PC-9 (cell line): ENCODE measurements at regions of chr3 and their contacts with region 1.

Region 1: DNA sequence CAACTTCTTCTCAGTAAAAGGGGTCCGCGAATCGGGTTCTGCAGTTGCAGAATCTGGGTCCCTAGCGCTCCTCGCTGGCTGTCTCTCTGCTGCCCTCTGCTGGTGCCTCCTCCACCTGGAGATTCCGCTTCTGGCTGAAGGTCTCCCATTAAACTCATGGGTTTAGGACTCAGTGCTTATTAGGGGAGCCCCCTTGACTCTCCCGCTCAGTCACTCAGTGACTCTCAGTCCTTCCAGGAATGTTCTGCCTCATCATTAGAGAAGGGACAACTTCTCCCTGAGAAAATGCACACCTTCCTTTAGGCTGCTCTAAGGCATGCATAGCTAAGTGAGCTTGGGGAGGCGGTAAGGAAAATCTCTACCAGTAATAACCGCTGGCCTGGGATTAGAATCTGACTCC is 7.1 kb downstream of the CPN2 start:
- DNase-seq: peak; percentile 50 to 81
- H3K4me3 ChIP-seq: no peak overlapping the region
- H3K27ac ChIP-seq: no peak overlapping the region
- H3K4me1 ChIP-seq: no peaks in the 10 kb centered on the region
- H3K27me3 ChIP-seq: no peaks in the 10 kb centered on the region
- CTCF ChIP-seq: peak; percentile 99

Region 2: GRCh38 chr3:193078996-193079753 is 1264.8 kb before region 1 on chr3:
- CTCF ChIA-PET with region 1: interaction called, 11 read pairs
- POLR2A ChIA-PET with region 1: no interaction called
- intact Hi-C with region 1: no loop called
- DNase-seq: no peak
- H3K4me3 ChIP-seq: no peak overlapping the region
- H3K27ac ChIP-seq: no peak overlapping the region
- H3K4me1 ChIP-seq: no peaks in the 10 kb centered on the region
- H3K27me3 ChIP-seq: no peaks in the 10 kb centered on the region
- CTCF ChIP-seq: no peak